Activated CD8-positive, alpha-beta memory T cell treated with anti-CD3 and anti-CD28 coated beads, Interleukin-2, amount 10 ng/mL, durations not matched to agents 7 days and 5 days (primary cell): ENCODE measurements at regions of chr1 and their contacts with region 1.

Region 1: GRCh38 chr1:39196244-39197215 is 8.0 kb upstream of the MACF1 start:
- DNase-seq: peak; percentile 83
- ATAC-seq: peak; percentile 46
- H3K4me3 Mint-ChIP-seq: peak overlapping the region; percentile 63
- H3K27ac Mint-ChIP-seq: peak overlapping the region; percentile 99
- H3K4me1 Mint-ChIP-seq: peaks cover 72% of the 10 kb centered on the region
- H3K27me3 Mint-ChIP-seq: no peaks in the 10 kb centered on the region

Region 2: DNA sequence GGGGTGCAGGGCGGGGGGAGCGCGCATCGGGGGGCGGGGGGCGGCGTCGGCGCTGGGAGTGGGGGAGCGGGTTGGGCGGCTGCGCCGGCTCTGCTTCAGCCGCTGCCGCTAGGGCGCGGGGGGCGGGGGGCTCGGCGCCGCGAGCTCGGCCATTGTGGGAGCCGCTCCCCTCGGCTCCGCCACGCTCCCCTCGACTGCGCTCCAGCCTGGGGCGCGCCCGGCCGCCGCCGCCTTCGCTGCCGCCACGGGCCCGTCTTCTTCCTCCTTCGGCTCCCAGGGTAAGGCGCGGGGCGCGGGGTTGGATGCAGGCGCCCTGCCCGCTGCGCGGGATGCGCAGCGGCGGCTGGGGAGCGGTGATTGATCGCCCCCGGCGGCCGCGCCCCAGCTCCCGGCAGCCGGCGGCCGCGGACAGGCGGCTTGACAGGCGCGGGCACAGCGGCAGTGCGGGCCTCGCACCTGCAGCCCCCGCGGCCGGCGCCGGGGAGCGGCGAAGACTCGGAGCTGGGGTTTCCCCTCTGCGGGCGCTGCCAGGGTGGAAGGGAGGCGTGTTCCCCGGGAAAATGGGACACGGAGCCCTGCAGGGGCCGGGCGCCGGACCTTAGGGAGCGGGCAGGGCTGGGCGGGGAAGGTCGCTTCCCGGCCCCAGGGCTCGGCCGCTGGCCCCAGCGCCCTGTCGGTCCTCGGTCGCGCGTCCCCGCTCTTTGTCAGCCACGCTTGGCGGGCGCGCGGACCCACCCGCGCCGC is 115.1 kb before region 1 on chr1:
- CTCF ChIA-PET with region 1: no interaction called
- DNase-seq: no peak
- ATAC-seq: peak; percentile 78
- H3K4me3 Mint-ChIP-seq: no peak overlapping the region
- H3K27ac Mint-ChIP-seq: no peak overlapping the region
- H3K4me1 Mint-ChIP-seq: peaks cover 2% of the 10 kb centered on the region
- H3K27me3 Mint-ChIP-seq: peaks cover 47% of the 10 kb centered on the region

Region 3: DNA sequence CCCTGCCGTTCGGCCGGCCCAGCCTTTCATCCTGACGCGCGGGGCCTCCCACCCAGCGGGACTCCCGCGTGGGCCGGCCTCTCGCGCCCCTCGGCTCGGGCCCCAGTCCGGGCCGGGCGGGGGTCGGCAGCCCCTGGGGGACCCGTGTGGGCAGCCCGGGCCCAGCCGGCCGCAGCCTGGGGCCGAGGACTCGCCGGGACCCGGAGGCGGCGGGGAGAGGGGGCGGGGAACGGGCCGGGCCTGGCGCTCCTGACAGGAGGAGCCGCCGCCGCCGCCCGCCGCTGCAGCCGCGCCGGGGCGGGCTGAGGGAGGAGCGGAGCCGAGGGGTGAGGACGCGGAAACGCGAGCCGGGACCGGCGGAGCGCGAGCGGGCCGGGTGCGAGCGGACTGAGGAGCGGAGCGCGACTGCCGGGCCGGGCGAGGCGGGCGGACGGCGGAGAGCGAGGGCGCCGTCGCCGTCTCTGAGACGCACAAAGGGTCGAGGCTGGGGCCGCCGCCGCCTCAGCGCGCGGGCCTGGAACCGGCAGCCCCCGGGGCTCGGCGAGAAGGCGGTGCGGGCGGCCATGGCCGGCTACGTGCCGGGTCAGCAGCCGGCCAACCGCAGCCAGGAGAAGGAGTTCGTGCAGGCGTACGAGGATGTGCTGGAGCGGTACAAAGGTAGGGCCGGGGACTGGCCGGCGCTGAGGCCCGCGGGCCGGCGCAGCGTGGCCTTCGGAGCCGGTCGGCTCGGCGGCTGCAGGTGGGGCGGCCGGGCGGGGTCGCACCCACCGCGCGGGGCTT is 91.3 kb before region 1 on chr1:
- CTCF ChIA-PET with region 1: interaction called, 72 read pairs
- DNase-seq: peak; percentile 70
- ATAC-seq: peak; percentile 90
- H3K4me3 Mint-ChIP-seq: peak overlapping the region; percentile 78
- H3K27ac Mint-ChIP-seq: no peak overlapping the region
- H3K4me1 Mint-ChIP-seq: peaks cover 27% of the 10 kb centered on the region
- H3K27me3 Mint-ChIP-seq: peaks cover 13% of the 10 kb centered on the region

Region 4: GRCh38 chr1:39170731-39171667 is 25.5 kb before region 1 on chr1:
- CTCF ChIA-PET with region 1: no interaction called
- DNase-seq: no peak
- ATAC-seq: no peak
- H3K4me3 Mint-ChIP-seq: no peak overlapping the region
- H3K27ac Mint-ChIP-seq: no peak overlapping the region
- H3K4me1 Mint-ChIP-seq: no peaks in the 10 kb centered on the region
- H3K27me3 Mint-ChIP-seq: peaks cover 2% of the 10 kb centered on the region

Region 5: GRCh38 chr1:39214998-39215873 is 18.7 kb after region 1 on chr1:
- CTCF ChIA-PET with region 1: interaction called, 153 read pairs
- DNase-seq: peak; percentile 67
- ATAC-seq: peak; percentile 79
- H3K4me3 Mint-ChIP-seq: peak overlapping the region; percentile 82
- H3K27ac Mint-ChIP-seq: peak overlapping the region; percentile 87
- H3K4me1 Mint-ChIP-seq: peaks cover 54% of the 10 kb centered on the region
- H3K27me3 Mint-ChIP-seq: no peaks in the 10 kb centered on the region

Region 6: DNA sequence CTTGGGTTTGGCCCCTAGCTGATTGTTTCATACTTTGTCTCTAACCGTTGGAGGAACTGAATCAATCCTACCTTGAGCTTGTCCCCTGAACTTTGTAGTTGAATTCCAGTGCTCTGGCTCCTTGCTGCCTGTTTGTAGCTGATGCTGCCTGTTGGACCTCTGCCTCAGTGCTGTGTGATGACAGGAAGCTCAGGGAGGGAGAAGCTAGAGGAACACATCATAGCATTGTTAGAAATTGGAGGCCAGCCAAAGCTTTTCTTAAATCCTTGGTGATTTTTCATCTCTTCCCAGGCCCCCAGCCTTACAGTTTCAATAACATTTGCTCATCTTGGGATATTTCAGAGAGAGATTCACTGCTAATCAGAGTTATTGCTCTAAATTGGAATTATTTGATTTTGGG is 41.9 kb after region 1 on chr1:
- CTCF ChIA-PET with region 1: interaction called, 21 read pairs
- DNase-seq: no peak
- ATAC-seq: no peak
- H3K4me3 Mint-ChIP-seq: no peak overlapping the region
- H3K27ac Mint-ChIP-seq: peak overlapping the region; percentile 5
- H3K4me1 Mint-ChIP-seq: peaks cover 29% of the 10 kb centered on the region
- H3K27me3 Mint-ChIP-seq: no peaks in the 10 kb centered on the region

Region 7: DNA sequence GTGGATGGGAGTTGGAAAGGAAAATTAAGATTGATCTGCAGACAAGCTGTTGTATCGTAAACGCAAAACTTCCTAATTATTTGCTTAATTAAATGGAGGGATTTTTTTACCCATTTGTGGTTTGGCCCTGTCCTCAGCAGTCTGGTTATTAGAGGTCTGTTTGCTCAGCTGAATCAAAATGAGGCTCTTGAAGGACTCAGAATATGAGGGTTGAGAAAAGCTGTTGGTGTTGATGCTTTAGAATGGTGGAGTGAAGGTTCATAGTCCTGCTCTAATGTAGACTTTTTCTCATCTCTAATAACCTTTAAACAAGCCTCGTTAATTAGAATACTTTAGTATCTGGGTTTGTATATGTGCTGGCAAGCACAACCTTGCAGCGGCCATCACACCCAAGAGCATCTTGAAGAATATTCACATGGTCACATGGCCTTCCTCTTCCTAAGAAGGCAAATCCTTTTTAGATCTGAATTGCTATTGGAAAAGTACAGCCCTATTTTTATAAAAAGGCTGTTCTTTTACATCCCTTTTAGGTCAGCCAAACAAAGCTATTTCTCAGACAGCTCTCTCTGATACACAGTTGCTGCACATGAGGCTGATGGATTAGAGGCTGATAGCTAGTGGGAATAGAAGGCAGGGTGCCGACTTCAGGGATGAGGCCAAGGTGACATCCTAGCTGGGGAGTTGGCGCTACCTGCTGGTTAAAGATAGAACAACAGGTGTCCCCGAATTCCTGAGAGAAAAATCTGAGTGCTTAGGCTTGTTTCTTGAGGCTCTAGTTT is 61.8 kb after region 1 on chr1:
- CTCF ChIA-PET with region 1: interaction called, 245 read pairs
- DNase-seq: peak; percentile 70
- ATAC-seq: peak; percentile 45
- H3K4me3 Mint-ChIP-seq: no peak overlapping the region
- H3K27ac Mint-ChIP-seq: peak overlapping the region; percentile 20
- H3K4me1 Mint-ChIP-seq: peaks cover 36% of the 10 kb centered on the region
- H3K27me3 Mint-ChIP-seq: no peaks in the 10 kb centered on the region